A549 (cell line): ENCODE measurements at regions of chr17 and their contacts with region 1.

Region 1: GRCh38 chr17:78785011-78785662 is 3.1 kb upstream of the CYTH1 start:
- DNase-seq: no peak
- ATAC-seq: no peak
- H3K4me3 ChIP-seq: no peak overlapping the region
- H3K27ac ChIP-seq: no peak overlapping the region
- H3K4me1 ChIP-seq: peaks cover 22% of the 10 kb centered on the region
- CTCF ChIP-seq: no peak
- EP300 ChIP-seq: no peak
- POLR2A ChIP-seq: no peak
- RAD21 ChIP-seq: no peak

Region 2: DNA sequence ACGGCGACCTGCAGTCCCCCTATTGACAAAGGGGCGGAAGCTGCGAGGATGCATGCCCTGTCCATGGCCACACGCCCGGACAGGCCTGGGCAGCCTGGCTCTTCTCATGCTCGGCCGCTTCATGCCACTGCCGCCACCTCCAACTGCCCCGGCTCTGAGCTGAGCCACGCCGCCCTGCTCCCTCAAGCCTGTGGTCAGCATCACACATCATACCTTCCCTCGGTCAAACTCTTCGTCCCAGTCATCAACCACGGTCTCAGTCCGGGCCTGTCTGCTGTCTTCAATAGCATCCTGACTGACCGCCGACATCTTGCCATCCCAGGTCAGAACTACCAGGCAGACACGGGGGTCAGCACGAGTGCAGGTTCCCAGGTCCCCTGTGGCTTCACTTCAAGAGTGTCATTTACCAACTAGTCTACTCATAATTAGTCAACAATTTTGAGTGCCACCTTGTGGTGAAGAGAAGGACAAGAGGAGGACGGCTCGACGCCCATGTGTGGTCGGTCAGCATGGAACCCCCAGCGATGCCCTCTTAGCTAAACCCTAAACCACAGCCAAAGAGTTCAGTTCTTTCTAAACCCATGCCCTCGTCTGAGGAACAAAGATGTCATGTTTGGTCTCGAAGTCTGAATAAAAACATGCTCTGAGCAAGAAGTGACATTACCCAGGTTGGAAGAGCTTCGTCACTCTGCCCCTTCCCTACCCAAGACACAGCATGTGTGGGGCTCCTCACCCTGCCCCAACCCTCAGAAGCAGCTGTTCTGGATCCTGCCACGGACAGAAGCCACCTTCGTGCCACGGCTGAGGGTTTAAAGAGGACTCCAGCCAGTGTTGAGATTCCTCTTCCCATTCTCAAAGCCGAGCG is 13.8 kb after region 1 on chr17:
- CTCF ChIA-PET with region 1: interaction called, 49 read pairs
- POLR2A ChIA-PET with region 1: no interaction called
- DNase-seq: peak in 1 of 2 experiments; percentile 45
- ATAC-seq: peak; percentile 35 to 66; a peak in 4 of 6 replicates
- H3K4me3 ChIP-seq: no peak overlapping the region
- H3K27ac ChIP-seq: peak overlapping the region in 1 of 2 experiments; percentile 33; a peak in 1 of 6 replicates
- H3K4me1 ChIP-seq: no peaks in the 10 kb centered on the region
- CTCF ChIP-seq: peak; percentile 52
- EP300 ChIP-seq: no peak
- POLR2A ChIP-seq: 0 out of 2 replicates have a peak, but pooled peaks have one; percentile 3
- RAD21 ChIP-seq: peak; percentile 27 to 41; a peak in 1 of 5 replicates

Region 3: DNA sequence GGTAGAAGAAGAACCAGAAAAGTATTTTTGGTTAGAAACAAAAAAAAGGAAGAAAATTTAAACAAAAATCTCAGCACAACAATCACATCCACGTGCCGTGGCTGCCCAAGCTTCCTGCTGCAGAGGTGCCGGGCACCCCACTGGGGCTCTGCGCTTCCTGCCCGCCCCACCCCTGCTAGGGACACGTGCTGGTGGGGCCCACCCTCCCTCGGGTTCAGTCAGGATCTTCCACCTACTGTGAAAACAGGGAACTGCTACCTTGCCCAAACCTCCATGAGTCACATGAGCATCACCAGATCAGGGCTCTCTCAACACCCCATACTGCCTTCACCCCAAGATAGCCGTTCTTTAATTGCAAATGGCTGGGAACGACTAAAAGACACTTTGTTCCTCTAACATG is 21.3 kb after region 1 on chr17:
- CTCF ChIA-PET with region 1: interaction called, 10 read pairs
- POLR2A ChIA-PET with region 1: no interaction called
- DNase-seq: peak; percentile 27 to 53
- ATAC-seq: peak; percentile 53 to 63
- H3K4me3 ChIP-seq: no peak overlapping the region
- H3K27ac ChIP-seq: no peak overlapping the region
- H3K4me1 ChIP-seq: no peaks in the 10 kb centered on the region
- CTCF ChIP-seq: no peak
- EP300 ChIP-seq: no peak
- POLR2A ChIP-seq: no peak
- RAD21 ChIP-seq: no peak

Region 4: GRCh38 chr17:78822552-78822951 is 37.4 kb after region 1 on chr17:
- CTCF ChIA-PET with region 1: interaction called, 11 read pairs
- POLR2A ChIA-PET with region 1: no interaction called
- DNase-seq: no peak
- ATAC-seq: peak in 1 of 2 experiments; percentile 9; a peak in 2 of 6 replicates
- H3K4me3 ChIP-seq: no peak overlapping the region
- H3K27ac ChIP-seq: no peak overlapping the region
- H3K4me1 ChIP-seq: no peaks in the 10 kb centered on the region
- CTCF ChIP-seq: no peak
- EP300 ChIP-seq: no peak
- POLR2A ChIP-seq: no peak
- RAD21 ChIP-seq: no peak